ENCODE measurements at regions of chr1 and their contacts with region 1.

Region 1: DNA sequence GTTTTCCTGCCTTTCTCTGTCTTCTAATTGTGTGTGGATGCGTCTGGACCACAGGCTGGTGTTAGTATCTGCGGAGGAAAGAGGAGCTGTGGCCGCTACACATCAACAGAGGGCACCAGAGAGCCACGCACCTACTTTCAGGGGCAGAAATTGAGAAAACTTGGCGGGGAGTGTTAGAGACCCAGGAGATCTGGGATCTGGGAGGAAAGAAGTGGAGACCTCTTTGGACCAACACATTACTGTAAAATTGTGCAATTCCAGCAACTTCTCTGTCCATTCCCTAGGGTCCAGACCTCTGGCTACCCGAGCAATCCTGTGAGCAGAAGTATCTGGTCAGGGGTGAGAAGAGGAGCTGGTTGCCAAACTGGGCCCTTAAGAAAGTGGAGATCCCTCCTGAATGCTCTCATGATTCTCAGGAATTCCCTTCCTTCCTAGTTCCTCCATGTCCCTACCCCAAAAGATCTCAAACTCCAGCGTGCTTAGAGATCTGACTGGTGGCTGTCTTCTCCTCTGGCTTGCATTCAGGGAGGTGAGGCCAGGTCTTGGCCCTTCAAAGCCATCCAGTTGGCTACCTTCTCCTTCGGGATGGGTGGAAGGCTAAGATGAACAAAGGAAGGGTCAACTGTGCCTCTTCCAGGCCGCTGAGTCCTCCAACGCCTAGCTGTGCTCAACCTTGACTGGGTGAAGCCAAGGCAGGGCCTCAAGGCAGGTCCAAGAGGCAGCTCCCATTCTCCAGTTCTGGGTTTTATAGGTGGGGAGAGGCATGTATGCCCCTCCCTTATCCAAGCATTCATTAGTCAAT is 1.2 kb upstream of the KIRREL1 start:
- DNase-seq: peak; percentile 87
- H3K4me3 Mint-ChIP-seq: peak overlapping the region; percentile 72
- H3K27ac Mint-ChIP-seq: no peak overlapping the region
- H3K4me1 Mint-ChIP-seq: peaks cover 35% of the 10 kb centered on the region
- H3K27me3 Mint-ChIP-seq: no peaks in the 10 kb centered on the region
- CTCF ChIP-seq: peak; percentile 99

Region 2: DNA sequence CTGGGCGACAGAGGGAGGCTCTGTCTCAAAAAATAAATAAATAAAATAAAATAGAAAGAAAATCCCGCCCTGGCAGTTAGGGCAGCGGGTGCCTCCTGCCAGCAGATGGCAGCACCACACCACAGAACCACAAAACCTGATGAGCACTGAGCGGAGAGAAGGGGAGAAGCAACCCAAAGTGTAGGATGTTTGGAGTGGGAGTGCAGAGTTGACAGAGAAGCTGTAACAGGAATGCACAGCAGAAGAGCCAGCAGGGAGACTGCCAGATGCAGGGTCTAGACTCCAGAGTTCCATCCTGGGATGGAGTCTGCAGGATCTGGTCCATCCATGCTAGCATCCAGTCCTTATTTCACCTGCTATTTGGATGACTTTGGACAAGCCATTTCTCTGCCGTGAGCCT is 28.5 kb before region 1 on chr1:
- CTCF ChIA-PET with region 1: interaction called, 746 read pairs
- POLR2A ChIA-PET with region 1: interaction called, 29 read pairs
- intact Hi-C with region 1: loop called (anchors 1 kb)
- DNase-seq: peak; percentile 91
- H3K4me3 Mint-ChIP-seq: no peak overlapping the region
- H3K27ac Mint-ChIP-seq: no peak overlapping the region
- H3K4me1 Mint-ChIP-seq: peaks cover 25% of the 10 kb centered on the region
- H3K27me3 Mint-ChIP-seq: peaks cover 18% of the 10 kb centered on the region
- CTCF ChIP-seq: peak; percentile 99

Region 3: GRCh38 chr1:158013840-158014730 is 21.9 kb after region 1 on chr1:
- CTCF ChIA-PET with region 1: interaction called, 494 read pairs
- POLR2A ChIA-PET with region 1: interaction called, 114 read pairs
- intact Hi-C with region 1: loop called (anchors 1 kb)
- DNase-seq: no peak
- H3K4me3 Mint-ChIP-seq: no peak overlapping the region
- H3K27ac Mint-ChIP-seq: peak overlapping the region; percentile 98
- H3K4me1 Mint-ChIP-seq: peaks cover 81% of the 10 kb centered on the region
- H3K27me3 Mint-ChIP-seq: no peaks in the 10 kb centered on the region
- CTCF ChIP-seq: no peak

Region 4: DNA sequence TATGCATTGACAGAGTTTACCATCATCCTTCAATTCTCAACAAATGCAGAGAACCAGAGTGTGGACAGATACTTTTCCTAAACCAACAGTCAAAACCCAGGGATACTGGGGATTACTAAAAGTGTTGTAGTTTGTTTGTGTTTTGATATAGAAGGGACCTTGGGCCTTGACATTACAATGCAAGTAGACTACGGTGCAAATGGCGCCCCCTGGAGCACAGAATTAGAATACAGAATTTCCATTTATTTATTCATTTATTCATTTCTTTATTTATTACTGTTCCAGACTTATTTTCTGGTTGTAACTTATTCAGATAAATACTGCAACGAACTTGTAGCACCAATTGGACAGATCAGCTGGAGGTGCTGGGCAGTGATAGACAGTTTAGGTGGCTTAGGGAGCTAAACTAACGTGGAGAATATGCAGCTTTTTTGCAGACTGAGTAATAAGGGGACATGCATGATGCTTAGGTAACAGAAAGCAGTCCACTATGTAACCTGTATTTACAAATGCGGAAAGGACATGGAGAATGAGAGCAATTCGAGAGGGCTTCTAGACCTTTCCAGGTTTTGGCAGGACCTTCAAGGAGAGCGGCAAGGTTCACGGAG is 43.8 kb after region 1 on chr1:
- CTCF ChIA-PET with region 1: interaction called, 603 read pairs
- POLR2A ChIA-PET with region 1: interaction called, 58 read pairs
- intact Hi-C with region 1: loop called (anchors 1 kb)
- DNase-seq: peak; percentile 68
- H3K4me3 Mint-ChIP-seq: no peak overlapping the region
- H3K27ac Mint-ChIP-seq: peak overlapping the region; percentile 77
- H3K4me1 Mint-ChIP-seq: peaks cover 45% of the 10 kb centered on the region
- H3K27me3 Mint-ChIP-seq: no peaks in the 10 kb centered on the region
- CTCF ChIP-seq: peak; percentile 92

Region 5: GRCh38 chr1:158067662-158068061 is 75.4 kb after region 1 on chr1:
- CTCF ChIA-PET with region 1: interaction called, 29 read pairs
- POLR2A ChIA-PET with region 1: interaction called, 3 read pairs
- intact Hi-C with region 1: no loop called
- DNase-seq: no peak
- H3K4me3 Mint-ChIP-seq: no peak overlapping the region
- H3K27ac Mint-ChIP-seq: peak overlapping the region; percentile 4
- H3K4me1 Mint-ChIP-seq: peaks cover 27% of the 10 kb centered on the region
- H3K27me3 Mint-ChIP-seq: no peaks in the 10 kb centered on the region
- CTCF ChIP-seq: no peak

Region 6: DNA sequence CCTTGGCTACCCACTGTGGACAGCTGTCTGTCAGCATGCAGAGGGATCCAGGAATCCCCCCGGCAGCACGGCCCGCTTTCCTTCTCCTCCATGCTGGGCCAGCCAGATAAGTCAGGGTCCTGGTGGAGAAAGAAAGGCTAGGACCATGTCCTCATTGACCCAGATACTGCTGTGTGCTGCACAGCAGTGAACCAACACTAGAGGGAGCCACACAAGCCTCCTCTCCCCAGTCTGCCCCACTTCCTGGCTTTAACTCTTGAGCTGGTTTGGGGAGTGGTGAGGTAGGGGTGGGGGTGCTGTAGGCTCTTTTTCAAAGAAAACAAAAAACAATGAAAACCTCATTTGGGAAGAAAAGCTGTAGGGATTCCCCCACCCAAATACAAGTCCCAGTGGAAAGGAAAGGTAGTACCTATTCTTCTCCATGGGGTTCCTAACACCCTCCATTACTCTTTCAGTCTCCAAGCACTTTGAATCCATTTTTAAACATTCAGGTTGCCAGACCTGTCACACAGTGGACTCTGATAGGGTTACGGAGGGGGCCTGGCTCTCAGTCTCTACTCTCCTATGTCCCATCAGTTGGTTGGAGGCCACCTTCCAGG is 103.6 kb after region 1 on chr1:
- CTCF ChIA-PET with region 1: interaction called, 172 read pairs
- POLR2A ChIA-PET with region 1: interaction called, 4 read pairs
- intact Hi-C with region 1: no loop called
- DNase-seq: peak; percentile 56
- H3K4me3 Mint-ChIP-seq: no peak overlapping the region
- H3K27ac Mint-ChIP-seq: peak overlapping the region; percentile 10
- H3K4me1 Mint-ChIP-seq: peaks cover 9% of the 10 kb centered on the region
- H3K27me3 Mint-ChIP-seq: no peaks in the 10 kb centered on the region
- CTCF ChIP-seq: peak; percentile 67

Measured in MCF 10A (cell line).